ENCODE measurements at regions of chr2 and their contacts with region 1.

Region 1: DNA sequence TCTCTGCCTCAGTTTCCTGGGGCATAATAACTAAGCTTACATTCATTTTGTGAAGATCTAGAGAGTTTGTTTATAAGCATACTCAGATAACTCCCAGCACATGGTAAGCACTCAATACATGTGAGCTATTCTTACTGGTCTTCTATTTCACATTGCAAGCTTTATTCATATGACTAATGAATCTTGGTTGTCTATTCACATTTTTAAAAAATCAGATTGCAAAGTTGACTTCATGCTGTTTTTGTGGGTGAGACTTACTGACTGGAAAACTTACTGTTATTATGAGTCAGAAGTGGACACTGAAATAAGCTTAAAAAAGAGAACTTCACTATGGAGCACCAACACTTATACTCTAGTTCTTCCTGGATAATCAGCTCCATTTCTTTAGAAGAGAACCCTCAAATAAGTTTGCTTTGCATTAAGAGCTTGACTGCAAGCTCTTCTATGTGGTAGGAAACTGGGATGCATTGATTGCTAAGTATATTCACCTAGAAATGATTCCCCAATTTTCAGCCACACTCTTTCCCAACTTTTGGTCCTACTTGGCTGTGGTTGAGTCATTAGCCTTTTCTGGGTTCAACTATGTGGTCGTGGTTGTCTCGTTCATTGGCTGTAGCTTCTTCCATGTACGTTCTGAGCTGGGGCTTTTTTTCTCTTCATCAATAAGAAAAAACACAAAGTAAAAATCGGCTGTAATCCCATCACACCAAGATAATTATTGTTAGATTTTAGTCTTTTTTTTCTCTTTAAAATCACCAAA is 29.5 kb upstream of the RBMS1 start:
- DNase-seq: no peak
- ATAC-seq: no peak
- H3K4me3 ChIP-seq: no peak overlapping the region
- H3K4me3 Mint-ChIP-seq: no peak overlapping the region
- H3K27ac ChIP-seq: no peak overlapping the region
- H3K27ac Mint-ChIP-seq: no peak overlapping the region
- H3K4me1 ChIP-seq: no peaks in the 10 kb centered on the region
- H3K4me1 Mint-ChIP-seq: no peaks in the 10 kb centered on the region
- H3K27me3 ChIP-seq: no peaks in the 10 kb centered on the region
- H3K27me3 Mint-ChIP-seq: no peaks in the 10 kb centered on the region
- CTCF ChIP-seq: no peak

Region 2: GRCh38 chr2:160498137-160498536 is 25.0 kb before region 1 on chr2:
- CTCF ChIA-PET with region 1: no interaction called
- POLR2A ChIA-PET with region 1: no interaction called
- intact Hi-C with region 1: no loop called
- DNase-seq: no peak
- ATAC-seq: no peak
- H3K4me3 ChIP-seq: no peak overlapping the region
- H3K4me3 Mint-ChIP-seq: no peak overlapping the region
- H3K27ac ChIP-seq: no peak overlapping the region
- H3K27ac Mint-ChIP-seq: no peak overlapping the region
- H3K4me1 ChIP-seq: peaks cover 4% of the 10 kb centered on the region
- H3K4me1 Mint-ChIP-seq: peaks cover 12% of the 10 kb centered on the region
- H3K27me3 ChIP-seq: no peaks in the 10 kb centered on the region
- H3K27me3 Mint-ChIP-seq: no peaks in the 10 kb centered on the region
- CTCF ChIP-seq: no peak

Region 3: DNA sequence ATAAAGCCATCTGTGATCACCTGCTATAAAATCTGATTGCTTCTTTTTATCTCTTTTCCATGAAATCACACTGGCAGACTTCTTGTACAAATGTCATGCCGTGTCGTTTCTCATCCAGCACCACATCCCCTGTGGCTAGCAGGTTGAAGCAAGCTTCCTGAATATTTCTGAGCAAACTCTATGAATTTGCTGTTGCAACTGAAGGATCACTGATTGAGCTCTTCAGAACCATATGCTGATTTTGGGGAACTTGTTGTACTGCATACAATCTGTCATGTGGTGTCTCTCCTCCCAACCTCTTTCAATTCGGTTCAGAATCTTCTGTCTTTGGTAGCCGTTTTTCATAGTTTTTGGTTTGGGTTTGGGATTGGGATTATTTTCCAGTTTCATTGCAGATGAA is 28.1 kb after region 1 on chr2:
- CTCF ChIA-PET with region 1: no interaction called
- POLR2A ChIA-PET with region 1: no interaction called
- intact Hi-C with region 1: loop called in 1 of 2 experiments (anchors 2 kb)
- DNase-seq: no peak
- ATAC-seq: no peak
- H3K4me3 ChIP-seq: no peak overlapping the region
- H3K4me3 Mint-ChIP-seq: no peak overlapping the region
- H3K27ac ChIP-seq: no peak overlapping the region
- H3K27ac Mint-ChIP-seq: no peak overlapping the region
- H3K4me1 ChIP-seq: no peaks in the 10 kb centered on the region
- H3K4me1 Mint-ChIP-seq: peaks cover 3% of the 10 kb centered on the region
- H3K27me3 ChIP-seq: no peaks in the 10 kb centered on the region
- H3K27me3 Mint-ChIP-seq: no peaks in the 10 kb centered on the region
- CTCF ChIP-seq: no peak

Measured in CD8-positive, alpha-beta T cell (primary cell).